ENCODE measurements at regions of chr12 and their contacts with region 1.

Region 1: GRCh38 chr12:56117778-56118687 is at the start of gene ZC3H10:
- DNase-seq: peak; percentile 98
- total RNA-seq, gene ZC3H10: 2.9 and 3.3 TPM in 2 replicates

Region 2: GRCh38 chr12:56189918-56190694 is 72.1 kb after region 1 on chr12:
- in situ Hi-C with region 1: loop called (anchors 5 kb)
- DNase-seq: peak; percentile 85

Region 3: GRCh38 chr12:56315622-56316473 is 197.8 kb after region 1 on chr12 and contains the start of gene CNPY2:
- in situ Hi-C with region 1: no loop called
- DNase-seq: peak; percentile 98
- total RNA-seq, gene CNPY2: 153 and 218 TPM in 2 replicates

Measured in G401 (cell line).